ENCODE measurements at regions of chr6 and their contacts with region 1.

Region 1: GRCh38 chr6:159726918-159727716 is at the start of gene WTAP:
- DNase-seq: peak; percentile 98
- H3K4me3 ChIP-seq: peak within 1 kb of the TSS; percentile 91
- H3K27ac ChIP-seq: peak within 1 kb of the TSS; percentile 89
- H3K4me1 ChIP-seq: peaks cover 39% of the 10 kb centered on the region
- CTCF ChIP-seq: no peak
- total RNA-seq, gene WTAP: 93.3 and 99.3 TPM in 2 replicates

Region 2: GRCh38 chr6:158803733-158804143 is 923.4 kb before region 1 on chr6:
- CTCF ChIA-PET with region 1: no interaction called
- POLR2A ChIA-PET with region 1: no interaction called
- intact Hi-C with region 1: loop called (anchors 10 kb)
- DNase-seq: peak; percentile 87
- H3K4me3 ChIP-seq: peak overlapping the region; percentile 57
- H3K27ac ChIP-seq: peak overlapping the region; percentile 100
- H3K4me1 ChIP-seq: peaks cover 94% of the 10 kb centered on the region
- CTCF ChIP-seq: peak; percentile 32; the same call in 1 of the 2 replicates

Region 3: DNA sequence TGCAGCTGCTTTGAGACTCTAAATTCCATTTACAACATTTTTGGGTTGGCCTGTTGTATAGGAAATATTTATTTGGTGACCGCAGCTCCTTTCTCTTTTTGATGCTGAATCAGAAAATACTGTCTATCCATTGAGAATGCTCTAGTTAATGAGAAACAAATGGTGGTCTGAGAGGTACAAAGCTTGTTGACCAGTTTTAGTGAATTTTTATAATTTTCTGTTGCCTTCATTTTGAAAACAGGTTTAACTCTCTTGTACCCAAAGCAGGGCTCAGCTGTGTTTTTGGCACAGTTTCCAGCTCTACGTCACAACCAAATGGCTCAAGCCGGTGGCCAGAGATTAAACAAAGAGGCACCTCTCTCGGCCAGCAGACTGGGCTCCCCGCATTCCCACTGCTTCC is 444.7 kb before region 1 on chr6:
- CTCF ChIA-PET with region 1: no interaction called
- POLR2A ChIA-PET with region 1: no interaction called
- intact Hi-C with region 1: no loop called
- DNase-seq: no peak
- H3K4me3 ChIP-seq: no peak overlapping the region
- H3K27ac ChIP-seq: no peak overlapping the region
- H3K4me1 ChIP-seq: no peaks in the 10 kb centered on the region
- CTCF ChIP-seq: no peak

Region 4: GRCh38 chr6:159761873-159762680 is 35.0 kb after region 1 on chr6 and contains the start of gene ACAT2:
- CTCF ChIA-PET with region 1: interaction called, 6 read pairs
- POLR2A ChIA-PET with region 1: interaction called, 11 read pairs
- intact Hi-C with region 1: loop called (anchors 1 kb)
- DNase-seq: peak; percentile 97
- H3K4me3 ChIP-seq: peak within 1 kb of the TSS; percentile 71
- H3K27ac ChIP-seq: peak within 1 kb of the TSS; percentile 81
- H3K4me1 ChIP-seq: peaks cover 15% of the 10 kb centered on the region
- CTCF ChIP-seq: no peak
- total RNA-seq, gene ACAT2: 39.4 and 42.4 TPM in 2 replicates

Measured in OCI-LY7 (cell line).